ENCODE measurements at regions of chr5 and their contacts with region 1.

Region 1: DNA sequence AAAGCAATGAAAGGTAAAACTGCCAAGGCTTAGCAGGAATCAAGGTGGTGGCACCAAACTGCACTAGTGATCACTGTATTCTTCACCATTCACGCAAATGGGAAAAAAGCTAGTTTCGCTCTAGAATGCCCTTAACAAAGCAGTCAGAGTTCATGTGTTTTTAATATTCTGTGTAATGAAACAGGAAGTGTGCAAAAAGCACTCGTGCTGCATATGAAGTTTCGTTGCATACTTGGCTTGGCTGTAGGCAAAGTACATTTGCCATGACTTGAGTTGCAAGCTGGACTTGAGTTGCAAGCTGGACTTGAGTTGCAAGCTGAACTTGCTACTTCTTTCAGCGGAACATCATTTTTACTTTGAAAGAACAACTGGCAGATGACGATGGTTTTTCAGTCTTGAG is 55.4 kb downstream of the FOXI1 start:
- DNase-seq: no peak
- ATAC-seq: no peak
- H3K4me3 ChIP-seq: no peak overlapping the region
- H3K27ac ChIP-seq: no peak overlapping the region
- H3K4me1 ChIP-seq: no peaks in the 10 kb centered on the region
- H3K27me3 ChIP-seq: peaks cover 10 to 26% of the 10 kb centered on the region in 2 experiments; a peak in 4 of 5 replicates
- CTCF ChIP-seq: no peak
- EP300 ChIP-seq: no peak
- POLR2A ChIP-seq: no peak
- RAD21 ChIP-seq: no peak

Region 2: GRCh38 chr5:169716278-169716677 is 444.8 kb before region 1 on chr5:
- CTCF ChIA-PET with region 1: no interaction called
- POLR2A ChIA-PET with region 1: no interaction called
- in situ Hi-C with region 1: loop called (anchors 10 kb)
- intact Hi-C with region 1: no loop called
- DNase-seq: no peak
- ATAC-seq: no peak
- H3K4me3 ChIP-seq: no peak overlapping the region
- H3K27ac ChIP-seq: no peak overlapping the region
- H3K4me1 ChIP-seq: no peaks in the 10 kb centered on the region
- H3K27me3 ChIP-seq: no peaks in the 10 kb centered on the region
- CTCF ChIP-seq: no peak
- EP300 ChIP-seq: no peak
- POLR2A ChIP-seq: no peak
- RAD21 ChIP-seq: no peak